ENCODE measurements at regions of chr1 and their contacts with region 1.

Region 1: GRCh38 chr1:151346769-151347522 is at the start of gene RFX5:
- DNase-seq: peak; percentile 99
- H3K4me3 ChIP-seq: peak within 1 kb of the TSS; percentile 97
- H3K27ac ChIP-seq: peak within 1 kb of the TSS; percentile 90
- H3K4me1 ChIP-seq: peaks cover 23% of the 10 kb centered on the region
- CTCF ChIP-seq: no peak
- total RNA-seq, gene RFX5: 99.7 and 122 TPM in 2 replicates

Region 2: GRCh38 chr1:151198255-151199127 is 148.5 kb before region 1 on chr1 and contains the start of gene PIP5K1A:
- CTCF ChIA-PET with region 1: no interaction called
- POLR2A ChIA-PET with region 1: no interaction called
- intact Hi-C with region 1: loop called (anchors 5 kb)
- DNase-seq: peak; percentile 99
- H3K4me3 ChIP-seq: peak within 1 kb of the TSS; percentile 98
- H3K27ac ChIP-seq: peak within 1 kb of the TSS; percentile 66
- H3K4me1 ChIP-seq: peaks cover 35% of the 10 kb centered on the region
- CTCF ChIP-seq: no peak
- total RNA-seq, gene PIP5K1A: 42.9 and 50.5 TPM in 2 replicates

Region 3: DNA sequence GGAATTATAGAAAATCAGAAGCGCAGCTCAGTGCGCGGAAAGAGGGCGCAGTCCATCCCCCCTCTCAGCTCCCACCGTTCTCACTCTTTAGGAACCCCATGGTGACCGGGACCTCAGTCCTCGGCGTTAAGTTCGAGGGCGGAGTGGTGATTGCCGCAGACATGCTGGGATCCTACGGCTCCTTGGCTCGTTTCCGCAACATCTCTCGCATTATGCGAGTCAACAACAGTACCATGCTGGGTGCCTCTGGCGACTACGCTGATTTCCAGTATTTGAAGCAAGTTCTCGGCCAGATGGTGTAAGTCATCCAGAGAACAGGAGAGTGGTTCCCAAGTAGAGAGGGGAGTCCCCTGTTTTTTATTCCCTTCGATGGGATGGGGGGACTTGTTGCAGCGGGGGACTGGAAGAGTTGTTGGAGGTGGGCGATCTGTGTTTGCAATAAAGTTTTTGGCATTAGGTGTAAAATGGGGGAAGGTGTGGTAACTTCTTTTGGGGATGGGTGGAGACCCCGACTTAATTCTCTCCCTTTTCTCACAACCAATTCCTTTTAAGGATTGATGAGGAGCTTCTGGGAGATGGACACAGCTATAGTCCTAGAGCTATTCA is 53.0 kb after region 1 on chr1:
- CTCF ChIA-PET with region 1: no interaction called
- POLR2A ChIA-PET with region 1: no interaction called
- intact Hi-C with region 1: loop called (anchors 2 kb)
- DNase-seq: peak; percentile 31
- H3K4me3 ChIP-seq: peak overlapping the region; percentile 92
- H3K27ac ChIP-seq: peak overlapping the region; percentile 42
- H3K4me1 ChIP-seq: peaks cover 10% of the 10 kb centered on the region
- CTCF ChIP-seq: no peak

Region 4: GRCh38 chr1:151510957-151511635 is 164.2 kb after region 1 on chr1 and contains the start of gene CGN:
- CTCF ChIA-PET with region 1: no interaction called
- POLR2A ChIA-PET with region 1: interaction called, 3 read pairs
- intact Hi-C with region 1: loop called (anchors 5 kb)
- DNase-seq: peak; percentile 95
- H3K4me3 ChIP-seq: peak within 1 kb of the TSS; percentile 69
- H3K27ac ChIP-seq: peak within 1 kb of the TSS; percentile 19
- H3K4me1 ChIP-seq: peaks cover 32% of the 10 kb centered on the region
- CTCF ChIP-seq: no peak
- total RNA-seq, gene CGN: 1.7 and 2.5 TPM in 2 replicates

Measured in OCI-LY7 (cell line).